A549 (cell line): ENCODE measurements at regions of chr3 and their contacts with region 1.

Region 1: DNA sequence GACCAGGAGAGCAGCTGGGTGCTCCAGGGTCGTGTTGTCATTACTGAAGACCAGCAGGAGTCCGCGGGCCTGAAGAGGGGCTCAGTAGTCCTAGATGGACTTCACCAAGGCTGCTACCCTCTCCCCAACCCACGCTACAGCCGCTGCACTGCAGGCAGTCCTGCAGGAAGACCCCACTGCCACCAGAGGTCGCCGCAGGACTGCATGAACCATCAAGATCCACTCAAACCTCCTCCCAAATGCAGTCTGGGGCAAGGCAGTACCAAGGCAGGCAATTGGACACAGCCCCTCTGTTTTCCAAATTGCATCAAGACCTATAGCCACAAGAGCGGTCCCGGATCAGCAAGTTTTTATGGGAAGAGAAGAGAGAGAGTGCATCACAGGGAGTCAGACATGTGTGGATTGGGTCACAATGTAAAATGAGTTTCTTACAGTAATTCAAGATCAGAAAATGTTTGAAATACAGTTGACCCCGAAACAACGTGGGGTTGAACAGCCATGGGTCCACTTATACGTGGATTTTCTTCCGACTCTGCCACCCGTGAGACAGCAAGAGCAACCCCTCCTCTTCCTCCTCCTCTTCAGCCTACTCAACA is 46.7 kb downstream of the DZIP1L start:
- DNase-seq: peak; percentile 75 to 79
- ATAC-seq: peak; percentile 97 to 98
- H3K4me3 ChIP-seq: no peak overlapping the region
- H3K27ac ChIP-seq: peak overlapping the region in 1 of 2 experiments; percentile 17; a peak in 1 of 6 replicates
- H3K4me1 ChIP-seq: peaks cover 12% of the 10 kb centered on the region
- CTCF ChIP-seq: peak; percentile 88
- EP300 ChIP-seq: no peak
- POLR2A ChIP-seq: no peak
- RAD21 ChIP-seq: peak; percentile 94 to 97

Region 2: GRCh38 chr3:138051946-138052802 is 16.5 kb before region 1 on chr3:
- CTCF ChIA-PET with region 1: interaction called, 13 read pairs
- POLR2A ChIA-PET with region 1: no interaction called
- DNase-seq: peak; percentile 7 to 45
- ATAC-seq: peak; percentile 94 to 95
- H3K4me3 ChIP-seq: no peak overlapping the region
- H3K27ac ChIP-seq: no peak overlapping the region
- H3K4me1 ChIP-seq: no peaks in the 10 kb centered on the region
- CTCF ChIP-seq: peak; percentile 56
- EP300 ChIP-seq: no peak
- POLR2A ChIP-seq: no peak
- RAD21 ChIP-seq: peak; percentile 49 to 65

Region 3: DNA sequence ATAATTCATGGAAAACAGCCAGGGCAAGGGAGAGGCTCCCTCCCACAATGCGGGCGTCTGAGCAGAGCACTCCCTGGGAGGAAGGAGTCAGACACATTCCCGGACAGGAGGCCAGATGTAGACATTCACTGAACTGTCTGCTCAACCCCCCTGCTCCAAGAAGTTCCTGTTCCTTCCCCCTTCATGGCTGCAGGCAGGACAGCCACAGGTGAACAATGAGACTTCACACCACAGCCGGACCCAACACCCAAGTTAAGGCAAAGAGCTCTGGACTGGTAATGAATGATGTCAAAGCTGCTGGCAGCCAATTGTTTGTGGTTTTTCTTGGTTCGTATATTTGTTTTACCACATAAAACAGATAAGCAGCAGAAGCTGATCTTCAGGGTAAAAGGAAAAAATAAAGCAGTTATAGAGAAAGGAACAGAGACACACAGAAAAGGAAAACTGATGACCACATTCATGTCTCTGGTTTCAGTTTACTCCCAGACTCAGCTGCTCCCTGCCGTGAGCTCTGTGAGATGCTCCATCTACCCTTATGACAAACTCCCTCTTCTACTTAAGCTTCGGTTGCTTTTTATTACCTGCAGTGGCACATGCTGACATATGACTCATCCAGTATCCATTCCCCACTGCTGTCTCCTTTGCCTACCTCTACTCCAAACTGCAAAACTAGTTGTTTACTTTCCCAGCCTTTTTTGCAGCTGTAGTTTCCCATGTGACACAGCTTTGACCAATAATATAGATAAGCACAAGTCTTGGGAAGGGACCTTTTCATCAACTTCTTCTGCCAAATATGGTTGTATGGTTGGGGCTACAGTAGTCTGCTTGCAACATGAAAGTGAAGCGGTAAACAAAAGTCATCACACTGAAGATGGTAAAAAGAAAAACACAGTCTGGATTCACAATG is 13.7 kb after region 1 on chr3:
- CTCF ChIA-PET with region 1: interaction called, 12 read pairs
- POLR2A ChIA-PET with region 1: no interaction called
- DNase-seq: peak in 1 of 2 experiments; percentile 70
- ATAC-seq: peak; percentile 49 to 54
- H3K4me3 ChIP-seq: no peak overlapping the region
- H3K27ac ChIP-seq: peak overlapping the region; percentile 87 to 88
- H3K4me1 ChIP-seq: peaks cover 66% of the 10 kb centered on the region
- CTCF ChIP-seq: no peak
- EP300 ChIP-seq: no peak
- POLR2A ChIP-seq: no peak
- RAD21 ChIP-seq: no peak

Region 4: GRCh38 chr3:138118612-138119422 is 50.1 kb after region 1 on chr3:
- CTCF ChIA-PET with region 1: interaction called, 224 read pairs
- POLR2A ChIA-PET with region 1: no interaction called
- DNase-seq: peak; percentile 63 to 64
- ATAC-seq: peak; percentile 62 to 72
- H3K4me3 ChIP-seq: no peak overlapping the region
- H3K27ac ChIP-seq: 0 out of 6 replicates have a peak overlapping the region, but pooled peaks of 1 of the 2 experiments have one; percentile 28
- H3K4me1 ChIP-seq: peaks cover 17% of the 10 kb centered on the region
- CTCF ChIP-seq: peak; percentile 70
- EP300 ChIP-seq: no peak
- POLR2A ChIP-seq: no peak
- RAD21 ChIP-seq: peak; percentile 84 to 92

Region 5: DNA sequence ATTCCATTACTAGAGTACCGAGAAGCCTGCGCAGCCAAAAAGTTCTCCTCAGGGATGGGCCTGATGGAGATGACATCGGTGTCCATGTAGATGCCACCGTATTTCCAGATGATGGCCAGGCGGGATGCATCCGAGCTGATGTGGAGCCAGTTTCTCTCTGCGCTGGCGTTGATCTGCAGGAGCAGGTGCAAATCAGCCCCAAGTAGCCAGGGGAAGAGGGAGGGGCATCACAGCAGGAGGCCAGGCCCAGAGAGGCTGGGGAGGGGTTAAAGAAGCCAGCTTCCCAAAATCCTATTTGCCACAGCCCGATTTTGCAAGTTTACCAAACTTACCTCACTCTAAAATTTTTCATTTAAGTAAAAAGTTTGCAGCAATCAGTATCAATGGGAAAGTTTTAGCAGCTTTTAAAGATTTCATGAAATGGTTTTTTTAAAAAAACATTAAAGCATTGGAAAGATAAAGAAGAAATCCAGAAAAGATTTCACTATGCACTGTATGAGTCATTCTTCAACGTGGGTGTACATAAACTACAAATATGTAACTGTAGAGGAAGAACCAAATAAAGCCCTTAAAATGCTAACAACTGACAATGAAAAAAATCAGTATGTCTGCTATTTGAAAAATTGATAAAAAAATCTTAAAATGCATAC is 56.2 kb after region 1 on chr3:
- CTCF ChIA-PET with region 1: interaction called, 224 read pairs
- POLR2A ChIA-PET with region 1: no interaction called
- DNase-seq: no peak
- ATAC-seq: no peak
- H3K4me3 ChIP-seq: no peak overlapping the region
- H3K27ac ChIP-seq: no peak overlapping the region
- H3K4me1 ChIP-seq: peaks cover 16% of the 10 kb centered on the region
- CTCF ChIP-seq: no peak
- EP300 ChIP-seq: no peak
- POLR2A ChIP-seq: no peak
- RAD21 ChIP-seq: no peak